ENCODE measurements at regions of chr17 and their contacts with region 1.

Region 1: DNA sequence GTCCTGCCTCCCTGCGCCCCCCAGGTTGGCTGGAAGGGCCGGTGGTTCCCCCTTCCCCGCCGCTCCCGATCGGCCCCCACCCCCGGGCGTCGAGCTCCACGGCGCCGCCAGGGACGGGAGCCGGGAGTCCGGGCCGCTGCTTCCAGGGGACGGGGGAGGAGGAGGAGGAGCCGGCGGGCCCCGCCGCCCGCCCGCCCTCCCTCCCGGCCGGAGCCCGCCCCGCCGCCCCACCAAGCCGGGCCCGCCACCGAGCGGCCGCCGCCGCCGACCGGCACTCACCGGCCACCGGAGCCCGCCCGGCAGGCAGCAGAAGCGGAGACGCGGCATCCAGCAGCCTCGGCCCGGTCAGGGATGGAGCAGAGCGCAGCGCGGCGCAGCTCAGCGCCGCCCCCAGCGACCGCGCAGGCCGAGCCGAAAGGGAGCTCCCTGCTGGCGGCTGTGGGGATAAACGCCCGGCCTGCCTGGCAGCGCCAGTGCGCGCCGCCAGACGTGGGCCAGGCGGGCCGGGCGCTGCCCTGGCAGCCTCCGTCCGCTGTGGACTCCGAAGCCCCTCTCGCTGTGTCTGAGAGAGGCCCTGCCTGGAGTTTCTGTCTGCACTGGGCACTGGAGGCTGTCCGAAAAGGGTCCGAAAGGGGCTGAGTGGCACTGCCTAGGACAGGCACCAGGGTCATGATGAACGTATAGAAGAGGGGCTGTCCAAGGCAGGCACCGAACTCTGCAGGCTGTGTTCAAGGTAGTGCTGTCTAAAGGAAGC is at the start of gene MYO18A:
- DNase-seq: no peak
- H3K4me3 ChIP-seq: peak within 1 kb of the TSS; percentile 65
- CTCF ChIP-seq: peak; percentile 94

Region 2: DNA sequence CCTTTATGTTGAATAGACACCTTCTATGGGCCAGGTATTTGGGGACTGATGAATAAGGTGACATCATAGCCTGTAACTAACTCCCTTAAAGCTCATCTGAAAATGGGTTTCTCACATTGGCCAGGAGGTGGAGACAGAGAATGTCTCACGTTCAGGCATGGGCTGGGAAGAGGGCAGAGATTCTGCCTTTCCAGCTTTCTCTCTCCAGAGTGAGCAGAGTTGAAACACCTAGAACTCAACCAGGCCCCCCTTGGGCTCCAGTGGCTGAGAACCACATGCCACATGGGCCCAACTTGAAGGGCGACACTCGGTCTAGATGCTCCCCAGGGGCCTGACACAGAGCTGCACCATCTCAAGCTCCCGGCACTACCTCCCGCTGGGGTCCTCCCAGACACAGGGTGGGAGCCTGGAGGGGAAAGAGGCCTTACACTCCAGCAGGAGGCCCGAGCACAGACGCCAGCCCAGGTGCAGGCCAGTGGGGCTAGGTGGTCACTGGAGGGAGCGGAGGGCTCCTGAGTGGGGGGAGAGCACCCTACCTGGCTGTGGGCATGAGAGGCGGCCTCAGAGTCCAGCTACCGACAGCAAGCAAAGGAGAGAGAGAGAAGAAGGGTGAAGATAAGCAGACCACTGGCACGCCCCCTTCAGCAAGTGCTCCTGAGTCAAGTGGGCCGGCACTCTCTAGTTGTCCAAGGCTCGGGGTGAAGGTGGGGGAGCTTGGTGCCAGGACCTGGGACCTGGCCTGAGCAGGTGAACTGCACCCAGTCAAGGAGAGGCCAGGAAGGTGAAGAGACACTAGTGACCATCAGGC is 55.9 kb before region 1 on chr17:
- CTCF ChIA-PET with region 1: interaction called, 47 read pairs
- POLR2A ChIA-PET with region 1: interaction called, 4 read pairs
- DNase-seq: no peak
- H3K4me3 ChIP-seq: no peak overlapping the region
- CTCF ChIP-seq: peak; percentile 72

Region 3: GRCh38 chr17:29133146-29133713 is 47.0 kb before region 1 on chr17:
- CTCF ChIA-PET with region 1: interaction called, 22 read pairs
- POLR2A ChIA-PET with region 1: no interaction called
- DNase-seq: no peak
- H3K4me3 ChIP-seq: no peak overlapping the region
- CTCF ChIP-seq: no peak

Region 4: DNA sequence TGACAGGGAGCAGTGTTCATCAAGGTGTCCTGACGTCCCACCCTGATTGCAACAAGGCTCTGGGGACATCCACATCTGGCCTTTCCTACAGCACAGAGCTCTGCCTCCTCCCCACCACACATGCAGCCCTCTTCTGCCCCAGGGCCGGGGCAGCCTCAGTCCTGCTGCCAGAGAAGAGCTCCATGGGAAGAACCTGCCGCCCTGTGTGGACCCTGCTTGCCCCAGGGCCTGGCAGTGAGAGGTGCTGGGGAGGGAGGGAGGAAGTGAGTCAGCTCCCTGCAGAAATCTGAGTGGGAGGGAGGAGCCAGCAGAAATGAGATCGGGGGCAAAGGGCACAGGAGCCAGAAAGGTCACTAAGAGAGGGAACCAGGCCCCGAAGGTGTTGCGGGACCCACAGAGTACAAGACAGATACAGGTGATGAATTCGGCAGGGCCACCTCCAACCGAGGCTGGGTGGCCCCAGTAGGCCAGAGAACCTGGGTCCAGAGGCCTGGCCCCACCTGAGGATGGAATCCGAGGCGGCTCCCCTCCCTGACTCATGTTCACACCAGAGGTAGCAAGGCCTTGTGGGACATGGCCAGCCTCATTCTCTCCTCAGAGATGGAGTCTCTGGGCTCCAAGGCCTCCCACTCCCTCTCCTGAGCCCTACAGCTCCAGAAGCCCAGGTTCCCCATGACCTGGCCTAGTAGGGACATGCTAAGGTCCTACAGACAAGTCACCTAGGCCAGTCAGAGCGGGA is 24.8 kb before region 1 on chr17:
- CTCF ChIA-PET with region 1: interaction called, 239 read pairs
- POLR2A ChIA-PET with region 1: interaction called, 3 read pairs
- DNase-seq: no peak
- H3K4me3 ChIP-seq: no peak overlapping the region
- CTCF ChIP-seq: no peak

Region 5: GRCh38 chr17:29195465-29196081 is 15.4 kb after region 1 on chr17:
- CTCF ChIA-PET with region 1: interaction called, 81 read pairs
- POLR2A ChIA-PET with region 1: no interaction called
- DNase-seq: no peak
- H3K4me3 ChIP-seq: no peak overlapping the region
- CTCF ChIP-seq: no peak

Region 6: GRCh38 chr17:29252101-29252866 is 72.1 kb after region 1 on chr17:
- CTCF ChIA-PET with region 1: interaction called, 15 read pairs
- POLR2A ChIA-PET with region 1: interaction called, 5 read pairs
- DNase-seq: no peak
- H3K4me3 ChIP-seq: no peak overlapping the region
- CTCF ChIP-seq: no peak

Measured in AG04449 (cell line).